ENCODE measurements at regions of chr9 and their contacts with region 1.

Region 1: DNA sequence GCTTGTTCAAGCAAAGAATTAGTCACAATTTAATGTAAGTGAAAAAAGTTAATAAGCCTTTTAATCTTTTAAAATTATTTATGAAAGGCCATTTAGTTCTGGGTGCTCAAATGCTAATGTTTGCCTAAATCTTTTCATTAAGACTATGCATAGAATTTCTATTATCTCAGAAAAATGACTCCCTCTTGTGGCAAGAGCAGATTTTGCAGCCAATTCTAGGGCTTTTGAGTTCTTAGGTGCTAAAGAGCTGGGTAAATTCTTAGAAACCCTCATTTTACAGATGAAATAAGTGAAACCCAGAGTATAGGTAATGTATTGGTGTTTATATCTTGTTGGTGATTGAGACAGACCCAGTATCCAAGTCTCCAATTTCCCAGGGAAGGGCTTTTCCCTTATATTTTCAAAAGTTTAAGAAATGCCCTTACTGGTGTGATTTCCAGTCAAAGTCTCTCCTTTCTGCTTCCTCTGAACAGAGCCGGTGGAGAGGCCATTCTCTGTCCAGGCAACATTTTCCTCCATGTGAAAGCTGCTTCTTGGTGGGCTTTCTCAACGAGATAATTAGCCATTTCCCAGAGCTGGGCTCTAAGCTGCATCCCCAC is 24.1 kb upstream of the PCSK5 start:
- DNase-seq: no peak
- ATAC-seq: no peak
- H3K4me3 ChIP-seq: no peak overlapping the region
- H3K27ac ChIP-seq: no peak overlapping the region
- H3K4me1 ChIP-seq: no peaks in the 10 kb centered on the region
- H3K27me3 ChIP-seq: peaks cover 0 to 3% (median 0%) of the 10 kb centered on the region in 3 donors
- CTCF ChIP-seq: peak; percentile 67

Region 2: GRCh38 chr9:75197561-75197960 is 668.8 kb before region 1 on chr9:
- intact Hi-C with region 1: loop called in 1 of 2 experiments (anchors 10 kb)
- DNase-seq: no peak
- ATAC-seq: no peak
- H3K4me3 ChIP-seq: no peak overlapping the region
- H3K27ac ChIP-seq: no peak overlapping the region
- H3K4me1 ChIP-seq: no peaks in the 10 kb centered on the region
- H3K27me3 ChIP-seq: no peaks in the 10 kb centered on the region
- CTCF ChIP-seq: no peak

Region 3: DNA sequence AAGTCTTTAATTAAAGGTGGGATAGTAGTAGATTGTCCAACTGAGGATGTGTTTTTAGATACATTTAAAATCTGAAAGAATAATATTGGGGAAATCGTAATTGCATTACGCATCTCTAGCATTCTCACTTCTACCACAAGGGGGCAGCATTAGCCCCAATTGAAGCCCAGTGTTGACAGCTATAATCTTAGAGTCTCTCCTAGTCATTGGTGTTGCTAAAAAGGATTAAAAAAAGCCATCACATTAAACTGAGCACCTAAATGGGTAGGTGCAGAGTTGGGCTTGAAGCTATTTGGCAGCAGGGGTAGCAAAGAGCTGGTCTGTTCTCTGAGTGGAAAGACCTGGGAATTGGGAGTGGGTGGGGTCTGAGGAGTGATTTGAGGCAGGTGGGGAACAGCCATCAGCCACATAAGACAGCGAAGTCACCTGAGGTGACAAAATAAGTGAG is 600.8 kb before region 1 on chr9:
- intact Hi-C with region 1: loop called in 1 of 2 experiments (anchors 10 kb)
- DNase-seq: peak in 1 of 2 donors; percentile 13
- ATAC-seq: peak in 3 of 4 donors; percentile 53 to 59 (median 58)
- H3K4me3 ChIP-seq: no peak overlapping the region
- H3K27ac ChIP-seq: no peak overlapping the region
- H3K4me1 ChIP-seq: no peaks in the 10 kb centered on the region
- H3K27me3 ChIP-seq: peaks cover 0 to 2% (median 0%) of the 10 kb centered on the region in 3 donors
- CTCF ChIP-seq: peak; percentile 83

Region 4: GRCh38 chr9:75699017-75699416 is 167.4 kb before region 1 on chr9:
- intact Hi-C with region 1: no loop called
- DNase-seq: no peak
- ATAC-seq: no peak
- H3K4me3 ChIP-seq: no peak overlapping the region
- H3K27ac ChIP-seq: no peak overlapping the region
- H3K4me1 ChIP-seq: no peaks in the 10 kb centered on the region
- H3K27me3 ChIP-seq: no peaks in the 10 kb centered on the region
- CTCF ChIP-seq: no peak

Region 5: DNA sequence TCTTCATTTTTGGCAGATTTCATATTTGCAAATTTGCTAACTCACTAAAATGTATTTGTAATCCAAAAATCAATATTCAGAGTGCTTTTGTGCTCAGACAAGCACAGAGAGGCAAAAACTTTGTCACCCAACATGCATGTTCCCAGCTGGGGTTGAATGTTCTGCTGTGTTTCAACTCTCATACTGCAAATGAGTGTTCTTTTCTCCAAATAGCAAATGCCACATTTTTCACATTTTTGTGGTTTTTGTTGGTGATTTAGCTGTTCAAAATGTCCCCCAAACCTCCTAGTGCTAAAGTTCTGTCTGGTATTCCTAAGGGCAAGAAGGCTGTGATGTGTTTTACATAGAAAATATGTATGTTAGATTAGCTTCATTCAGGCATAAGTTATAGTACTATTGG is 63.2 kb before region 1 on chr9:
- intact Hi-C with region 1: no loop called
- DNase-seq: no peak
- ATAC-seq: no peak
- H3K4me3 ChIP-seq: no peak overlapping the region
- H3K27ac ChIP-seq: no peak overlapping the region
- H3K4me1 ChIP-seq: no peaks in the 10 kb centered on the region
- H3K27me3 ChIP-seq: no peaks in the 10 kb centered on the region
- CTCF ChIP-seq: no peak

Measured in psoas muscle (tissue), 8 donors.